ENCODE measurements at regions of chr17 and their contacts with region 1.

Region 1: GRCh38 chr17:59331129-59331928 is at the start of gene YPEL2:
- DNase-seq: peak; percentile 92
- ATAC-seq: peak; percentile 95
- H3K4me3 ChIP-seq: peak within 1 kb of the TSS; percentile 78 to 91 (median 91)
- H3K27ac ChIP-seq: peak within 1 kb of the TSS; percentile 79
- H3K4me1 ChIP-seq: peaks cover 77% of the 10 kb centered on the region
- H3K27me3 ChIP-seq: no peaks in the 10 kb centered on the region; a peak in 1 of 5 replicates
- CTCF ChIP-seq: no peak
- EP300 ChIP-seq: peak in 1 of 2 experiments; percentile 64; a peak in 2 of 4 replicates
- POLR2A ChIP-seq: peak in 1 of 2 experiments; percentile 63; a peak in 2 of 4 replicates
- RAD21 ChIP-seq: peak; percentile 41
- total RNA-seq, gene YPEL2: 7.5 and 8.5 TPM in 2 replicates

Region 2: GRCh38 chr17:59234631-59235030 is 96.7 kb before region 1 on chr17:
- CTCF ChIA-PET with region 1: no interaction called
- POLR2A ChIA-PET with region 1: no interaction called
- in situ Hi-C with region 1: no loop called
- intact Hi-C with region 1: no loop called
- DNase-seq: no peak
- ATAC-seq: no peak
- H3K4me3 ChIP-seq: no peak overlapping the region
- H3K27ac ChIP-seq: no peak overlapping the region
- H3K4me1 ChIP-seq: no peaks in the 10 kb centered on the region
- H3K27me3 ChIP-seq: no peaks in the 10 kb centered on the region
- CTCF ChIP-seq: no peak
- EP300 ChIP-seq: no peak
- POLR2A ChIP-seq: no peak
- RAD21 ChIP-seq: no peak

Region 3: GRCh38 chr17:59277031-59277430 is 54.3 kb before region 1 on chr17:
- CTCF ChIA-PET with region 1: no interaction called
- POLR2A ChIA-PET with region 1: no interaction called
- in situ Hi-C with region 1: no loop called
- intact Hi-C with region 1: no loop called
- DNase-seq: no peak
- ATAC-seq: no peak
- H3K4me3 ChIP-seq: no peak overlapping the region
- H3K27ac ChIP-seq: no peak overlapping the region
- H3K4me1 ChIP-seq: no peaks in the 10 kb centered on the region
- H3K27me3 ChIP-seq: no peaks in the 10 kb centered on the region
- CTCF ChIP-seq: no peak
- EP300 ChIP-seq: no peak
- POLR2A ChIP-seq: no peak
- RAD21 ChIP-seq: no peak

Region 4: DNA sequence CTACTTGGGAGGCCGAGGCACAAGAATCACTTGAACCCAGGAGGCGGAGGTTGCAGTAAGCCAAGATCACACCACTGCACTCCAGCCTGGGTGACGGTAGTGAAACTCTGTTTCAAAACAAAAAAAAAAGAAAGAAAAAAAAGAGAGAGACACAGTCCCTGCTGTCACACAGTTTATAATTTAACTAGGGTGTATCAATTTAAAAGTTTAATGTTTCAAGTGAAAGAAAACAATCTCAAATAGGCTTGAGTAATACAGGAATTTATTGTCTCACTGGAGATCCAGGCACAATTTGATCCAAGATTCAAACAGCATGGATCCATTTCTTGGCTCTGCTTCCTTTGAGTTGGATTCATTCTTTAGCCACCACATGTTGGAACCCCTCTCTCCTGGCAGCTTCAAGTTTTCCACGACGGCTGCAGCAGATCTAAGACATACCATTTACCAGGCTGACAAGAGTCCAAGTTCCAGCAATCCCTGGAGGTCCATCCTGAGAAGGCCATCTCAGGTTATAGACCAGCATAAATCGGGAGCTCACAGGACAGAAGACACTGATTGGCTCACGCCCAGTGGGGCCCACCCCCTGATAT is 97.7 kb after region 1 on chr17:
- CTCF ChIA-PET with region 1: no interaction called
- POLR2A ChIA-PET with region 1: interaction called, 13 read pairs
- in situ Hi-C with region 1: no loop called
- intact Hi-C with region 1: no loop called
- DNase-seq: no peak
- ATAC-seq: no peak
- H3K4me3 ChIP-seq: no peak overlapping the region
- H3K27ac ChIP-seq: no peak overlapping the region
- H3K4me1 ChIP-seq: peaks cover 95% of the 10 kb centered on the region
- H3K27me3 ChIP-seq: no peaks in the 10 kb centered on the region; a peak in 1 of 5 replicates
- CTCF ChIP-seq: no peak
- EP300 ChIP-seq: no peak
- POLR2A ChIP-seq: no peak
- RAD21 ChIP-seq: no peak

Region 5: GRCh38 chr17:59435238-59435637 is 103.9 kb after region 1 on chr17:
- CTCF ChIA-PET with region 1: interaction called, 63 read pairs
- POLR2A ChIA-PET with region 1: interaction called, 13 read pairs
- in situ Hi-C with region 1: loop called (anchors 5 kb)
- intact Hi-C with region 1: loop called (anchors 1 kb)
- DNase-seq: no peak
- ATAC-seq: no peak
- H3K4me3 ChIP-seq: no peak overlapping the region
- H3K27ac ChIP-seq: no peak overlapping the region
- H3K4me1 ChIP-seq: peaks cover 71% of the 10 kb centered on the region
- H3K27me3 ChIP-seq: no peaks in the 10 kb centered on the region; a peak in 1 of 5 replicates
- CTCF ChIP-seq: no peak
- EP300 ChIP-seq: no peak
- POLR2A ChIP-seq: no peak
- RAD21 ChIP-seq: no peak

Region 6: GRCh38 chr17:59440784-59441441 is 109.6 kb after region 1 on chr17:
- CTCF ChIA-PET with region 1: interaction called, 63 read pairs
- POLR2A ChIA-PET with region 1: interaction called, 4 read pairs
- in situ Hi-C with region 1: loop called (anchors 5 kb)
- intact Hi-C with region 1: loop called (anchors 1 kb)
- DNase-seq: peak; percentile 88
- ATAC-seq: peak; percentile 98
- H3K4me3 ChIP-seq: peak overlapping the region in 1 of 3 experiments; percentile 5; a peak in 1 of 6 replicates
- H3K27ac ChIP-seq: no peak overlapping the region
- H3K4me1 ChIP-seq: peaks cover 42% of the 10 kb centered on the region
- H3K27me3 ChIP-seq: no peaks in the 10 kb centered on the region; a peak in 1 of 5 replicates
- CTCF ChIP-seq: peak; percentile 97
- EP300 ChIP-seq: no peak
- POLR2A ChIP-seq: no peak
- RAD21 ChIP-seq: peak; percentile 95